ENCODE measurements at regions of chr1 and their contacts with region 1.

Region 1: GRCh38 chr1:62508187-62508758 is 71.4 kb downstream of the USP1 start:
- DNase-seq: peak; percentile 41

Region 2: DNA sequence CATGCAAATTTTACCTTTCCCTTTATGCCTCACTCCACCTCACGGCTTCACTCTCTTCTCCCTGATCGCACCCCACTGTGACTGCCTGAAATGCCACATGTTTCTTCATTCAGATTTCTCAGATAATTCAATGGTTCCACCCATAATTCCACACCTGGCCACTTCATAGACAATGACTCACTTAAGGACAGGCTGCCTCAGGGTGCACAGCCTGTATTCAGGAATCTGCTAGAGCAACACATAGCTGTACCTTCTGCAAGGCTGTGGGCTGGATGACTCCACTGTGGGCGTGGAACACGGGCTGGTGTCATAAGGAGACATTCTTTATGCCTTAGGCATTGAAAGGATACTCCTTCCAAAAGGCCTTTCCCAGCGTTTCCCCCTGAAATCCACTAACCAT is 277.6 kb before region 1 on chr1:
- in situ Hi-C with region 1: no loop called
- DNase-seq: no peak

Region 3: DNA sequence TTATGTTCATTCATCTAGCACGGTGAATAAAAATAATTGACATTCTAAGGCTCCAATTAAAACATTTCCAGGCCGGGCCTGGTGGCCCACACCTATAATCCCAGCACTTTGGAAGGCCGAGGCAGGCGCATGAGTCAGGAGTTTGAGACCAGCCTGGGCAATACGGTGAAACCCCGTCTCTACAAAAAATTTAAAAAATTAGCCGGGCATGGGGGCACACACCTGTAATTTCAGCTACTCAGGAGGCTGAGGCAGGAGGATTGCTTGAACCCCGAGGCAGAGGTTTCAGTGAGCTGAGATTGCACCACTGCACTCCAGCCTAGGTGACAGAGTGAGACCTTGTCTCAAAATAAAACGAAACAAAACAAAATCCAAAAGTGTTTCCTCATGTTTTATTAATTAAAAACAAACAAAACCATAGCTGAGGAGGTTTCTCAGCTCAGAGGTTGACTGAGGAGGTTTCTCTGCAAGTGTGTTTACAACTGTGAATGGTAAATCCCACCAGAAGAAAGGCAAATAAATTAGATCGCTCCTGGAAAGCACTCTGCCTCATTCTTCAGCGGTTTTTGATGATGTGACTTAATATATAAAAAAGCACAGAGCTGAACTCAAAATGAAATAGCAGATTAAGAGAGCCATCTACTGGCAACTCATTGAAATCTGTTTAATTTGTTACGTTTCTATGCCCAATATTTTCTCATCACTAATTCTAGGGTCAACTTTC is 238.0 kb after region 1 on chr1:
- in situ Hi-C with region 1: loop called (anchors 25 kb)
- DNase-seq: peak; percentile 61